Naive thymus-derived CD4-positive, alpha-beta T cell (primary cell): ENCODE measurements at regions of chr5 and their contacts with region 1.

Region 1: GRCh38 chr5:131796793-131797693 is at the start of gene FNIP1:
- DNase-seq: peak; percentile 96 to 99 (median 97)
- ATAC-seq: peak; percentile 98
- H3K4me3 ChIP-seq: peak within 1 kb of the TSS; percentile 90
- H3K4me3 Mint-ChIP-seq: peak within 1 kb of the TSS; percentile 88 to 99 (median 97)
- H3K27ac ChIP-seq: peak within 1 kb of the TSS; percentile 95
- H3K27ac Mint-ChIP-seq: peak within 1 kb of the TSS; percentile 92 to 98 (median 97)
- H3K4me1 ChIP-seq: peaks cover 0 to 19% of the 10 kb centered on the region in 2 donors
- H3K4me1 Mint-ChIP-seq: peaks cover 11 to 41% (median 36%) of the 10 kb centered on the region in 7 donors
- H3K27me3 ChIP-seq: no peaks in the 10 kb centered on the region
- H3K27me3 Mint-ChIP-seq: peaks cover 0 to 10% (median 0%) of the 10 kb centered on the region in 5 donors
- total RNA-seq, gene FNIP1: 30.5 to 48.5 (median 40.3) TPM

Region 2: DNA sequence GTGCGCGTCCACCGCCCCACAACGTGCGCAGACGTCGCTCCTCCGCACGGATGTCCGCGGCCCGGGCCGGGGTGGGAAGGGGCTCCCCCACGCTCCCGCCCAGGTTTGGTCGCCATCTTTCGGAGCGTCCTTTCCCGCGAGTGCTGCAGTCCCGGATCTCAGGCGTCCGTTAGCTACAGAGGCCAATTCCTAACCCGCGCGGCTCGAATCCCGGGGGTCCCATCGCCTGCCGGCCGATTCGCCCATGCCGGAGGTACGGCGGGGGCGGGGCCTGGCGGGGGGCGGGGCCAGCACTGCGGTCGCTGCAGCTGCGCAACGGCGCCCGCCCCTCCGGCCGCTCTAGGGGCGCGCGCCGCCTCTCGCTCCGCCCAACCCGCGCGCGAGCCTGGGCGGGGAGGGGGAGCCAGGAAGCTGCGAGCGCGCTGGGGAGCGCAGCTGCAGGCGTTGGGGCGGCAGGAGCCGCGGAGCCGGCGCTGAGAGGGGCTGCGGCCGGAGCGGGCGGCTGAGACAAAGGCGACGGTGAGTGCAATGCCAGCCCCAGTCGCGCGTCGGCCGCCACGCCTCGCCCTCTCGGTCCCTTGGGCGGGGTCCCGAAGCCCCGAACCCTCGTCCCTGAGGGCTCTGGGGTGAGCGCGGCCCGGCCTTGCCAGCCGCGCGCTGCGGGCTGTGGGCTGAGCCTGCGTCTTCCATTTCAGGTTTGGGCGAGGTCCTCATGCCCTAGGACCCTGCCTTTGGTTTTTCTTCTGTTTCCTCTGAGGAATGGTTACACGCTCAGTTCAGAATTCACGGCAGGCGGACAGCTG is 533.2 kb before region 1 on chr5 and contains the start of gene CDC42SE2:
- CTCF ChIA-PET with region 1: no interaction called
- POLR2A ChIA-PET with region 1: no interaction called
- intact Hi-C with region 1: loop called in 1 of 2 experiments (anchors 5 kb)
- DNase-seq: peak; percentile 81 to 95 (median 90)
- ATAC-seq: peak; percentile 94
- H3K4me3 ChIP-seq: peak within 1 kb of the TSS; percentile 87
- H3K4me3 Mint-ChIP-seq: peak within 1 kb of the TSS; percentile 80 to 97 (median 92)
- H3K27ac ChIP-seq: peak within 1 kb of the TSS; percentile 98
- H3K27ac Mint-ChIP-seq: peak within 1 kb of the TSS; percentile 88 to 98 (median 95)
- H3K4me1 ChIP-seq: peaks cover 36% of the 10 kb centered on the region in 2 donors
- H3K4me1 Mint-ChIP-seq: peaks cover 25 to 61% (median 47%) of the 10 kb centered on the region in 7 donors
- H3K27me3 ChIP-seq: no peaks in the 10 kb centered on the region
- H3K27me3 Mint-ChIP-seq: no peaks in the 10 kb centered on the region
- total RNA-seq, gene CDC42SE2: 143 to 265 (median 215) TPM

Region 3: DNA sequence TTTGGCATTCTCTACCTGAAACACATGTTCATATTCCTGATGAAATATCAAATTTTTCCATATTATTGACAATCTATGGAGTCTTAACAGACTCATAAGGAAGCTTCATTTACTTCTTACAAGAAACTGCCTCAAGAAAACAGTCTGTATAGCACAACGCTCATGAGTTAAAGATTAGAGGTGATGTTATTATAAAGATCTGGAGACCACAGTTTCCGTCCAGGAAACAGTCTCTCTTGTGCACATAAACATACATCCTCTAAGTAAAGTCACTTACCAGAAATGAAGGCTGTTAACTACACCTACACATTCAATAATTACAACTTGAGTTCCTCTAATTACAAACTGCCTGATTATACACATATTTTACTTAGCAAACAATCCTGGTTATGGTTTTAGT is 248.9 kb before region 1 on chr5:
- CTCF ChIA-PET with region 1: interaction called, 4 read pairs
- POLR2A ChIA-PET with region 1: no interaction called
- intact Hi-C with region 1: loop called in 1 of 2 experiments (anchors 5 kb)
- DNase-seq: peak in 7 of 9 donors; percentile 60 to 82 (median 68)
- ATAC-seq: peak; percentile 97
- H3K4me3 ChIP-seq: peak overlapping the region; percentile 63
- H3K4me3 Mint-ChIP-seq: peak overlapping the region; percentile 93 to 100 (median 98)
- H3K27ac ChIP-seq: peak overlapping the region; percentile 83
- H3K27ac Mint-ChIP-seq: peak overlapping the region; percentile 92 to 99 (median 97)
- H3K4me1 ChIP-seq: peaks cover 6 to 44% of the 10 kb centered on the region in 2 donors
- H3K4me1 Mint-ChIP-seq: peaks cover 28 to 71% (median 58%) of the 10 kb centered on the region in 7 donors
- H3K27me3 ChIP-seq: no peaks in the 10 kb centered on the region
- H3K27me3 Mint-ChIP-seq: no peaks in the 10 kb centered on the region

Region 4: GRCh38 chr5:131747180-131748105 is 49.6 kb before region 1 on chr5:
- CTCF ChIA-PET with region 1: no interaction called
- POLR2A ChIA-PET with region 1: interaction called, 4 read pairs
- intact Hi-C with region 1: loop called (anchors 1 kb)
- DNase-seq: peak in 7 of 9 donors; percentile 21 to 64 (median 48)
- ATAC-seq: peak; percentile 80
- H3K4me3 ChIP-seq: no peak overlapping the region
- H3K4me3 Mint-ChIP-seq: peak overlapping the region; percentile 14 to 80 (median 68)
- H3K27ac ChIP-seq: peak overlapping the region; percentile 63
- H3K27ac Mint-ChIP-seq: peak overlapping the region; percentile 84 to 96 (median 89)
- H3K4me1 ChIP-seq: peaks cover 10 to 11% of the 10 kb centered on the region in 2 donors
- H3K4me1 Mint-ChIP-seq: peaks cover 28 to 57% (median 51%) of the 10 kb centered on the region in 7 donors
- H3K27me3 ChIP-seq: no peaks in the 10 kb centered on the region
- H3K27me3 Mint-ChIP-seq: no peaks in the 10 kb centered on the region

Region 5: DNA sequence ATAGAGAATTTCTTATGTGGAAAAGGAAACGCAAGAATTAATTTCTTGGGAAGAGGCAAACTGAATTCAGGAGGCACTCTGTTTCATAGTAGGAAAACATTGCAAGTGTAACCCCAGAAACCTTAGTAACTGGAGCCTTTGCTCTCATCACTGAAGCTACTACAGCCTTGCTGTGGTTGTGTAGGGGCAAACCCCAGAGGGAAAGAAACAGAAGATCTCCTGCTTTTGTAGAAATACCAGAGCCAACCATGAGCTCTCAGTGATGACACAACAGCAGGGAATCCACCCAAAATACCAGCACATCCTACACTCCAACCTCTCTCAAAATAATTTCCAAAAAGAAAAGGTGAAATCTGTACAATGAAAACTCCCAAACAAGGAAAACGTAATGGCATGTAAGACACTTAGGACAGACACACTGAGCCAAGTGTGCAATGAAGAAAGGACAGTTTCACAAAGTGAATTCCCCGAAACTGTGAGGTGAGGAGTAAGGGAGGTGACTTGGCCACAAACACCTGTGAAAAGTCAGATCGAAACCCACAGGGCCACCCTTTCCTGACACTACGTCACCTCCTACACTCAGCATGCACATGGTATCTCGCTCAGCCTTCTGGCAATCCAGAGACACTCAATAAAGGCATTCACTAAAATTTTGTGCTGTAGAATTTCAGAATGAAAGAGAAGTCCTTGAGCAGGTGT is 223.0 kb after region 1 on chr5:
- CTCF ChIA-PET with region 1: no interaction called
- POLR2A ChIA-PET with region 1: no interaction called
- intact Hi-C with region 1: loop called in 1 of 2 experiments (anchors 5 kb)
- DNase-seq: peak in 8 of 9 donors; percentile 37 to 75 (median 57)
- ATAC-seq: peak; percentile 95
- H3K4me3 ChIP-seq: no peak overlapping the region
- H3K4me3 Mint-ChIP-seq: peak overlapping the region in 7 of 10 donors; percentile 35 to 81 (median 53)
- H3K27ac ChIP-seq: peak overlapping the region; percentile 46
- H3K27ac Mint-ChIP-seq: peak overlapping the region; percentile 38 to 95 (median 69)
- H3K4me1 ChIP-seq: peaks cover 19 to 24% of the 10 kb centered on the region in 2 donors
- H3K4me1 Mint-ChIP-seq: peaks cover 10 to 54% (median 43%) of the 10 kb centered on the region in 7 donors
- H3K27me3 ChIP-seq: no peaks in the 10 kb centered on the region
- H3K27me3 Mint-ChIP-seq: peaks cover 0 to 45% (median 0%) of the 10 kb centered on the region in 5 donors

Region 6: DNA sequence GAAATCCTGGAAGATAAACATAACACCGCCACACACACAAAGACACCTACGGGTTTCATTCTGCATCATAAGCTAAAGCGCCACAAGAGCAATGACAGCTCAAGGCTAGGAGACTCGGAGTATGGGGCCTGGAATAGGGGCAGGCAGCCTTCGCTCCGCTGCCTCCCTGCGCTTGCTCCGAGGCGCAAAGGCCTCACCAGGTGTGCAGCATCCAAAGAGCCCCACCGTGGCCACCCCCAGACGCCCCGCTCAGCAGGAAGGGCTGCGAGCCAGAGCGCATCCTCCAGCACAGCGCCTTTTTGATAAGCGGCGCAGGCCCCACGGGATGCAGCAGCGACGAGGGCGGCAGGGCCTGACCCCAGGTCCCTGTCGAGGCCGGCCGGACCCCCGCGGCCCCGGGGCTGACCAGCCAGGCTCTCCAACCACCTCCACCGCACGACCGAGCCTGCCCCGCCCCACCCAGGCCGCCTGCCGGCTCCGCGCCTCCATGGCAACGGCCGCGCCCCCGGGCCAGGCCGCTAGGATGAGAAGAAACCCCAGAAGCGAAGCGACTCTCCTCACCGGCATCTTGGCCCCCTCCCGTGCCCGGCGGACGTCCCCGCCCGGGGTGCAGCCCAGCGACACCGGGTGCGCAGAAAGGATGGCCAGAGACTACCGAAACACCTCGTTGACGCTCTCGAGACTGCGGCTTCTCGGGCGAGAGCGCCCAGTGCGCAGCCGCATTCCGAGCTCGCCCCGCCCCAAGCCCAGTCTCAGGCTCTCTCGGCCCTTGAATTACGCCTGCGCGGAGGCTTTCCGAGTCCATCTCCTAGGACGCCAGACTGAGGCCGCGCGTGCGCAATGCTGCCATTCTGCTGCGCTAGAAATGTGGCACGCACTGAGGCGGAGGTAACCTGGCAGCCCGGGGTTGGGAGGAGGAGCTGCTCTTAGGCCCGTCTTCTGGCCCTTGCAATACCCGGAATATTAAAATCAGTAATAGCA is 940.1 kb after region 1 on chr5 and contains the start of gene KIF3A:
- CTCF ChIA-PET with region 1: no interaction called
- POLR2A ChIA-PET with region 1: no interaction called
- intact Hi-C with region 1: loop called in 1 of 2 experiments (anchors 10 kb)
- DNase-seq: peak; percentile 93 to 98 (median 97)
- ATAC-seq: peak; percentile 95
- H3K4me3 ChIP-seq: peak within 1 kb of the TSS; percentile 96
- H3K4me3 Mint-ChIP-seq: peak within 1 kb of the TSS; percentile 87 to 94 (median 92)
- H3K27ac ChIP-seq: peak within 1 kb of the TSS; percentile 78
- H3K27ac Mint-ChIP-seq: peak within 1 kb of the TSS; percentile 84 to 94 (median 92)
- H3K4me1 ChIP-seq: peaks cover 13 to 18% of the 10 kb centered on the region in 2 donors
- H3K4me1 Mint-ChIP-seq: peaks cover 14 to 52% (median 39%) of the 10 kb centered on the region in 7 donors
- H3K27me3 ChIP-seq: no peaks in the 10 kb centered on the region
- H3K27me3 Mint-ChIP-seq: peaks cover 0 to 18% (median 2%) of the 10 kb centered on the region in 5 donors
- total RNA-seq, gene KIF3A: 10.5 to 30.0 (median 18.7) TPM